ENCODE measurements at regions of chr11 and their contacts with region 1.

Region 1: DNA sequence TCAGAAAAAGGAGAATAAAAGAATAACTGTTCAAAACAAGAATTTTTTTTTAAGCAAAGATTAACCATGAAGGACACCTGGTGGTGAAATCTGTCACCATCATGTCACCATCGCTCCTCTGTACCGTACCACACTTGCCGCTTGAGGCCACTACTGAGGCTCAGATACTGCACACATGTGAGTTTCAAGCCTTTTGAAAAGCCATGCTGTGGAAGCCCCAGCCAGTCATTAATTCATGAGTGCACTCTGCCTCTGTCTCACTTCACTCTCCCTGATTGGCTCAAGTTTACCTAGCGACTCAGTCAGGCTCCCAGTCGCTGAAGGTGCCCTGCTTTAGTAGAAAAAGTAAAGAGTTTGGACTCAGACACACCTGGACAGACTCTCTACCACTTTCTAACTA is 6.6 kb upstream of the MS4A12 start:
- DNase-seq: peak; percentile 57 to 64 (median 62)
- ATAC-seq: peak; percentile 100
- H3K4me3 ChIP-seq: no peak overlapping the region
- H3K27ac ChIP-seq: no peak overlapping the region
- H3K4me1 ChIP-seq: no peaks in the 10 kb centered on the region
- H3K27me3 ChIP-seq: no peaks in the 10 kb centered on the region
- CTCF ChIP-seq: peak; percentile 88 to 99 (median 99)
- EP300 ChIP-seq: no peak
- POLR2A ChIP-seq: no peak
- RAD21 ChIP-seq: peak; percentile 46 to 65

Region 2: DNA sequence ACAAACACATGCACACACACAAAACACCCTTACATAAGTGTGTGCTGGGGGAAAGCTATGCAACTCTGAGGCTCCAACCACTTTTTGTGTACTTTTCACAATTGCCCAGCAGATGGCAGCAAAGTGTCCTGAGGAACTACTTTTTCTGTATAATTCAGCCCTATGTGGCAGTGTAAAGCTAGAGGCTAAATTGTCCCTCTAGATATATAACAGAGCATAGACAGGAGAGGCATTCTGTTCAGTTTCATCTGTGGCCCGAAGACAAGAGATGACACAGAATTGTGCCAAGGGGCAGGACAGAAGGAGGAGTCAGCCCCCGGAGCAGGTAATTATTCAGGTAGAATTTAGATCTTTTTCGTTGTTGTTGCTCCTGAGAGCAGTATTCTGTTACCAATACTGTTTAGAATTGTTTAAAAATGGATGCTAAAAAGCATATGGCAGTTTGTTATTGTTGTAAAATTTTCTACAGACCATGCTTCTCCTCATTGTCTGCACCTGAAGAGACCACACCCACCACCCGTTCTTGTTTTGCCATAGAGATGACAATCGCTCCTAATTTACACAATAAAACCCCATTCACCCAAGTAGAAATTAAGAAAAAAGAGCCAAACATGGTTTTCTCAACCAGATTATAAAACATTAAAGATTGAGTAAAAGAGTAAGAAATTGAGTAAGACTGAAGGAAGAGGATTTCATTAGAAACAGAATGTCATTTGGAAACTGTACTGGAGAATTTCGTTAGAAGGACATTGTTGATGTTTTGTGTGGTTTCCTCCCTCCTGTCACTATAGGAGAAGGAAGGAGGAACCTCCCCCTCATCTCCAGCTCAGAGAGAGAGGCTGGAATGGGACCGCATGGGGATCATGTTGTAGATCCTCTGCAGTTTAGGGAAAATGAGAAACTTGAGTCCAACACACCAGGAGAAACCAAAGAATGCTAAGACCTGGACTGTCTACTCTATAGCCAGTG is 122.2 kb before region 1 on chr11:
- CTCF ChIA-PET with region 1: interaction called, 15 read pairs
- POLR2A ChIA-PET with region 1: no interaction called
- in situ Hi-C with region 1: no loop called
- intact Hi-C with region 1: loop called (anchors 2 kb)
- DNase-seq: peak; percentile 47 to 63 (median 49)
- ATAC-seq: peak; percentile 88
- H3K4me3 ChIP-seq: no peak overlapping the region
- H3K27ac ChIP-seq: no peak overlapping the region
- H3K4me1 ChIP-seq: no peaks in the 10 kb centered on the region
- H3K27me3 ChIP-seq: peaks cover 0 to 13% of the 10 kb centered on the region in 2 experiments; a peak in 2 of 5 replicates
- CTCF ChIP-seq: peak; percentile 72 to 76 (median 76)
- EP300 ChIP-seq: no peak
- POLR2A ChIP-seq: no peak
- RAD21 ChIP-seq: peak; percentile 50 to 70

Measured in K562 (cell line).